ENCODE measurements at regions of chr4 and their contacts with region 1.

Region 1: DNA sequence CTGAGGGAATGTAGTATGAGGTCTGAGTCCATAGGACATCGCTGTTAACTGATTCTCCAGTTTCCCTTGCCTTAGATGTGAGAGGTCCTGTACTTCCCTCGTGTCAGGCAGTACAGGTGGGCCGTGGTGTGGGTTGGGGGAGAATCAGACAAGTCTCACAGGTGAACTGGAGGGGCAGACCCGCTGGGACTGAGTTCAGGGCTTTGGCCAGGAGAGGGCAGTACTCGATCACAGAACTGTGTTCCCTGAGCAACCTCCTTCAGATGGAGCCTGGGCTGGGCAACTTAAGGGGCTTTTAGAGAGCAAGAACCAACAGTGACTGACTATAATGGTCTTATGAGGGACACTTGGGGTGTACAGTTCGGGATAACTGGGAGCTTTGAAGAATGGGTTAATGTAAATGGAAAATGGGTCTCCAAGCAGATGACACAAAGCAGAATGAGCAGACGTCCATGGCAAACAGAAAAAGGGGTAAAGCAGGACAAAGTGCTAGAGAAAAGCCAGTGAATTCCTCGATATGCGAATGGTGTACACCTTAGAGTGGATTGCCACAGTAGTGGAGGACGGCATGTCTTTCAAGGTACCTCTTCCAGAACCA is 83.6 kb downstream of the CCNG2 start:
- DNase-seq: peak; percentile 18
- ATAC-seq: peak; percentile 82
- H3K4me3 ChIP-seq: no peak overlapping the region
- H3K27ac ChIP-seq: no peak overlapping the region
- H3K4me1 ChIP-seq: no peaks in the 10 kb centered on the region
- H3K27me3 ChIP-seq: peaks cover 4% of the 10 kb centered on the region; the same call in 1 of the 2 replicates
- CTCF ChIP-seq: peak; percentile 73

Region 2: DNA sequence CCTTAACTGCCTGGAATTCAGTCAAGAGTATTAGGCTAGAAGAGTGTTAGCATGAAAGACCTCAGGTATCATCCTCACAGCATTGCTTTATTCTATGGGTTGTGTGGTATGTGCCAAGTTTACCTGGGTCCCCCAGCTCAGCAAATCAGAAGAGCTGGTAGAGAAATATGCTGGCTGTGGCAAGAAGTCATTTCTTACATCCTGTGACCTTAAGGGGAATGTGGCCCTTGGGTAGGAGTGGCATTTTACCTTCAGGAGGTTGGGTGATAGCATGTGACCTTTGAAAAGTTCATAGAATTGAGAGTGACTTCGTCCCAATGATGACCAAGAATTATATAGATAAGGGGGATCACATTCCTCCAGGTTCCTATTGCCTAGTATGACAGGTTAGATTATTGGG is 14.4 kb after region 1 on chr4:
- CTCF ChIA-PET with region 1: no interaction called
- POLR2A ChIA-PET with region 1: no interaction called
- in situ Hi-C with region 1: no loop called
- intact Hi-C with region 1: no loop called
- DNase-seq: no peak
- ATAC-seq: no peak
- H3K4me3 ChIP-seq: no peak overlapping the region
- H3K27ac ChIP-seq: no peak overlapping the region
- H3K4me1 ChIP-seq: no peaks in the 10 kb centered on the region
- H3K27me3 ChIP-seq: no peaks in the 10 kb centered on the region
- CTCF ChIP-seq: no peak

Region 3: GRCh38 chr4:77308843-77309242 is 68.3 kb after region 1 on chr4:
- CTCF ChIA-PET with region 1: no interaction called
- POLR2A ChIA-PET with region 1: no interaction called
- in situ Hi-C with region 1: no loop called
- intact Hi-C with region 1: loop called (anchors 10 kb)
- DNase-seq: no peak
- ATAC-seq: peak; percentile 68; the same call in 1 of the 2 replicates
- H3K4me3 ChIP-seq: no peak overlapping the region
- H3K27ac ChIP-seq: no peak overlapping the region
- H3K4me1 ChIP-seq: no peaks in the 10 kb centered on the region
- H3K27me3 ChIP-seq: no peaks in the 10 kb centered on the region
- CTCF ChIP-seq: peak; percentile 44

Region 4: DNA sequence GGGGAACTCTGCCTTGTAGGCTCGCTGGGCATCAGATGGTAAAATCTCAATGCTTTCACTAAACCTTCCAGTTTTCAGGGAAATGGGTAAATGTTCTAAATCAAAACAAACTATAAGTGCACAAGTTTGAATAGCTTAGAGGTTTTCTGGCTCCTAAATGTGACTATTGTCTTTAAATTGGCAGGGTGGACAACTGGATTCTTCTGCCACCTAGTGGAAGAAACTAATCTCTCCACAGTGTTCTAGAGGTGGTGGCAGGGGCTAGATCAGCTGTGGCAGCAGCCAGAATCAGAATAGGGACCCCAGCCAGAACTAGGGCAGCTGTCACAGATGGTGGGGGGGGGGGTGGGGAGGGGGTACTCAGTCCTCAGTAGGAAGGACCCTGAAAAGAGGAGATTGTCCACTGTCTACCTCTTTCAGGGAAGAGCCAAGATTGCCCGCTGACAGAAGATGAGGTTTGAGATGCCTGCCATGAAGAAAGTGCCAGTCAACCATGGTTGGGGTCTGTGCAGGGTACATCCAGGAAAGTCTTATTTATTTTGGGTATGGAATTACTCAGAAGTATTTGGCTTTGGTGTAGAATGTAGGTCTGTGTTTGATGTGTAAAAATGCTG is 117.9 kb after region 1 on chr4:
- CTCF ChIA-PET with region 1: no interaction called
- POLR2A ChIA-PET with region 1: no interaction called
- in situ Hi-C with region 1: no loop called
- intact Hi-C with region 1: loop called (anchors 1 kb)
- DNase-seq: peak; percentile 2
- ATAC-seq: peak; percentile 73; the same call in 1 of the 2 replicates
- H3K4me3 ChIP-seq: no peak overlapping the region
- H3K27ac ChIP-seq: no peak overlapping the region
- H3K4me1 ChIP-seq: no peaks in the 10 kb centered on the region
- H3K27me3 ChIP-seq: no peaks in the 10 kb centered on the region
- CTCF ChIP-seq: peak; percentile 60

Measured in Panc1 (cell line).